ENCODE measurements at regions of chr9 and their contacts with region 1.

Region 1: DNA sequence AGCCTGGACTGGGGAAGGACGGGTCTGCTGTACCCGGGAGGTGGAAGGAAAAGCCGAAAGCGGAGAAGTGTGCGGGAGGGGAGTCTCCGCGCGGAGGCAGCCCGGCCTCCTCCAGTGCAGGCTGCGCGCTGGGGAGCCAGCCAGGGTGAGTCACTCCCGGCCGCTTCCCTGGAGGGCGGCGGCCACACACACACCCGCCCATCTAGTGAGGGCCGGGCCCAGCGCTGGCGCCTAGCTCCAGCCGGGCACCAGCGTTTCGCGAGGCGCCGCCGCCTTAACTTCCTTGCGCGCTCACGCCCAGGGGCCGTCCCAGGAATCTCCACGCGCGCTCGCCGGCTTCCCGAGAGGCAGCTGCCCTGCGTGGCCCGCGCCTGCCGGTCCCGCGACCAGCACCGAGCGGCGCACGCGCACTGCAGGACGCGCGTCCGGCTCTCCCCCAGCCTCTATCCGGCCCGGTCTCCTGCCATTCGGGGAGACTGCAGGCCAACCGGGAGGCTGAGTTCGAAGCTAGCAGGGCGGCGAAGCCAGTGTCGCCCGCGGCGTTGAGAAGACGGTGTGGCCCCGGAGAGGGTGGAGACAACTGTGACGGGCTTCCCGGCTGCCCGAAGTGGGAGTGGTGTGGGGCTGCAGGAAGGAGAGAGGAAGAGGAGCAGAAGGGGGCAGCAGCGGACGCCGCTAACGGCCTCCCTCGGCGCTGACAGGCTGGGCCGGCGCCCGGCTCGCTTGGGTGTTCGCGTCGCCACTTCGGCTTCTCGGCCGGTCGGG is at the start of gene JAK2:
- DNase-seq: peak; percentile 62 to 85 (median 72)
- ATAC-seq: peak; percentile 87
- H3K4me3 ChIP-seq: peak within 1 kb of the TSS; percentile 52
- H3K4me3 Mint-ChIP-seq: peak within 1 kb of the TSS; percentile 83 to 98 (median 94)
- H3K27ac ChIP-seq: peak within 1 kb of the TSS; percentile 78
- H3K27ac Mint-ChIP-seq: peak within 1 kb of the TSS; percentile 80 to 94 (median 90)
- H3K4me1 ChIP-seq: peaks cover 20 to 32% of the 10 kb centered on the region in 2 donors
- H3K4me1 Mint-ChIP-seq: peaks cover 20 to 41% (median 26%) of the 10 kb centered on the region in 7 donors
- H3K27me3 ChIP-seq: no peaks in the 10 kb centered on the region
- H3K27me3 Mint-ChIP-seq: no peaks in the 10 kb centered on the region
- total RNA-seq, gene JAK2: 11.7 to 76.0 (median 17.5) TPM

Region 2: GRCh38 chr9:4382722-4383317 is 602.0 kb before region 1 on chr9:
- CTCF ChIA-PET with region 1: no interaction called
- POLR2A ChIA-PET with region 1: no interaction called
- intact Hi-C with region 1: loop called in 1 of 2 experiments (anchors 1 kb)
- DNase-seq: peak in 6 of 9 donors; percentile 7 to 54 (median 42)
- ATAC-seq: no peak
- H3K4me3 ChIP-seq: no peak overlapping the region
- H3K4me3 Mint-ChIP-seq: no peak overlapping the region
- H3K27ac ChIP-seq: no peak overlapping the region
- H3K27ac Mint-ChIP-seq: no peak overlapping the region
- H3K4me1 ChIP-seq: no peaks in the 10 kb centered on the region
- H3K4me1 Mint-ChIP-seq: peaks cover 0 to 10% (median 0%) of the 10 kb centered on the region in 7 donors
- H3K27me3 ChIP-seq: no peaks in the 10 kb centered on the region
- H3K27me3 Mint-ChIP-seq: peaks cover 0 to 4% (median 0%) of the 10 kb centered on the region in 5 donors

Region 3: GRCh38 chr9:4679268-4680172 is 305.3 kb before region 1 on chr9 and contains the start of gene CDC37L1:
- CTCF ChIA-PET with region 1: no interaction called
- POLR2A ChIA-PET with region 1: no interaction called
- intact Hi-C with region 1: loop called (anchors 1 to 2 kb)
- DNase-seq: peak; percentile 98 to 100 (median 99)
- ATAC-seq: peak; percentile 98
- H3K4me3 ChIP-seq: peak within 1 kb of the TSS; percentile 72
- H3K4me3 Mint-ChIP-seq: no peak within 1 kb of the TSS
- H3K27ac ChIP-seq: peak within 1 kb of the TSS; percentile 95
- H3K27ac Mint-ChIP-seq: no peak within 1 kb of the TSS
- H3K4me1 ChIP-seq: peaks cover 15 to 19% of the 10 kb centered on the region in 2 donors
- H3K4me1 Mint-ChIP-seq: peaks cover 9 to 19% (median 17%) of the 10 kb centered on the region in 7 donors
- H3K27me3 ChIP-seq: no peaks in the 10 kb centered on the region
- H3K27me3 Mint-ChIP-seq: no peaks in the 10 kb centered on the region
- total RNA-seq, gene CDC37L1: 13.4 to 28.0 (median 22.9) TPM

Region 4: DNA sequence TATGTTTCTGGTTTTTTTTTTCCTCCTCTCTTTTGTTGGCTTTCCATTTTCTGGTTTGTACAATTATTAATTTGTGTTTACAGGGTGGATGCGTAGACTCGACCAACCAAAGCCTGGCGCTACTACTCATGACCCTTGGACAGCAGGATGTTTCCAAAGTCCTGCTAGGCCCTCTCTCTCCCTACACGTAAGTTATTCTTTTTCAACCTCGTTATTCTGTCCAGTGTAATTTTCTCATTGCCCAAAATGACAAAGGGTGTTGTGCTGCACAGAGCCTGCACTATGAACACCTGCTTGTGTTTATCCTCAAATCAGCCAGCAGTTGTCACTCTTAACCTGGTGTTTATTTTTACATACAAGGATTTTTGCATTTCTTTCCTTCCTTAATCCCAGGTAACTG is 135.4 kb before region 1 on chr9:
- CTCF ChIA-PET with region 1: interaction called, 3 read pairs
- POLR2A ChIA-PET with region 1: no interaction called
- intact Hi-C with region 1: loop called (anchors 1 kb)
- DNase-seq: no peak
- ATAC-seq: no peak
- H3K4me3 ChIP-seq: no peak overlapping the region
- H3K4me3 Mint-ChIP-seq: no peak overlapping the region
- H3K27ac ChIP-seq: no peak overlapping the region
- H3K27ac Mint-ChIP-seq: no peak overlapping the region
- H3K4me1 ChIP-seq: no peaks in the 10 kb centered on the region
- H3K4me1 Mint-ChIP-seq: peaks cover 0 to 20% (median 0%) of the 10 kb centered on the region in 7 donors
- H3K27me3 ChIP-seq: no peaks in the 10 kb centered on the region
- H3K27me3 Mint-ChIP-seq: no peaks in the 10 kb centered on the region

Region 5: GRCh38 chr9:5437254-5438216 is 452.7 kb after region 1 on chr9 and contains the start of gene PLGRKT:
- CTCF ChIA-PET with region 1: no interaction called
- POLR2A ChIA-PET with region 1: no interaction called
- intact Hi-C with region 1: loop called (anchors 2 kb)
- DNase-seq: peak; percentile 77 to 91 (median 89)
- ATAC-seq: peak; percentile 96
- H3K4me3 ChIP-seq: peak within 1 kb of the TSS; percentile 84
- H3K4me3 Mint-ChIP-seq: peak within 1 kb of the TSS; percentile 86 to 98 (median 96)
- H3K27ac ChIP-seq: peak within 1 kb of the TSS; percentile 81
- H3K27ac Mint-ChIP-seq: peak within 1 kb of the TSS; percentile 90 to 100 (median 98)
- H3K4me1 ChIP-seq: peaks cover 18 to 19% of the 10 kb centered on the region in 2 donors
- H3K4me1 Mint-ChIP-seq: peaks cover 7 to 50% (median 36%) of the 10 kb centered on the region in 7 donors
- H3K27me3 ChIP-seq: no peaks in the 10 kb centered on the region
- H3K27me3 Mint-ChIP-seq: no peaks in the 10 kb centered on the region
- total RNA-seq, gene PLGRKT: 15.8 to 31.7 (median 16.8) TPM

Region 6: GRCh38 chr9:6681147-6681956 is 1696.5 kb after region 1 on chr9:
- CTCF ChIA-PET with region 1: no interaction called
- POLR2A ChIA-PET with region 1: no interaction called
- intact Hi-C with region 1: loop called in 1 of 2 experiments (anchors 10 kb)
- DNase-seq: peak; percentile 71 to 95 (median 90)
- ATAC-seq: peak; percentile 90
- H3K4me3 ChIP-seq: peak overlapping the region; percentile 89
- H3K4me3 Mint-ChIP-seq: peak overlapping the region; percentile 88 to 98 (median 95)
- H3K27ac ChIP-seq: peak overlapping the region; percentile 91
- H3K27ac Mint-ChIP-seq: peak overlapping the region; percentile 97 to 100 (median 99)
- H3K4me1 ChIP-seq: peaks cover 0 to 6% of the 10 kb centered on the region in 2 donors
- H3K4me1 Mint-ChIP-seq: peaks cover 7 to 31% (median 20%) of the 10 kb centered on the region in 7 donors
- H3K27me3 ChIP-seq: no peaks in the 10 kb centered on the region
- H3K27me3 Mint-ChIP-seq: no peaks in the 10 kb centered on the region